Activated naive CD4-positive, alpha-beta T cell treated with anti-CD3 and anti-CD28 coated beads, Interleukin-2, amount 10 ng/mL, durations not matched to agents 7 days and 5 days (primary cell): ENCODE measurements at regions of chr2 and their contacts with region 1.

Region 1: GRCh38 chr2:240560480-240561326 is 546 bp downstream of the DUSP28 start:
- DNase-seq: peak; percentile 100
- H3K4me3 Mint-ChIP-seq: peak overlapping the region; percentile 82
- H3K27ac Mint-ChIP-seq: peak overlapping the region; percentile 90
- H3K4me1 Mint-ChIP-seq: peaks cover 79% of the 10 kb centered on the region
- H3K27me3 Mint-ChIP-seq: no peaks in the 10 kb centered on the region

Region 2: DNA sequence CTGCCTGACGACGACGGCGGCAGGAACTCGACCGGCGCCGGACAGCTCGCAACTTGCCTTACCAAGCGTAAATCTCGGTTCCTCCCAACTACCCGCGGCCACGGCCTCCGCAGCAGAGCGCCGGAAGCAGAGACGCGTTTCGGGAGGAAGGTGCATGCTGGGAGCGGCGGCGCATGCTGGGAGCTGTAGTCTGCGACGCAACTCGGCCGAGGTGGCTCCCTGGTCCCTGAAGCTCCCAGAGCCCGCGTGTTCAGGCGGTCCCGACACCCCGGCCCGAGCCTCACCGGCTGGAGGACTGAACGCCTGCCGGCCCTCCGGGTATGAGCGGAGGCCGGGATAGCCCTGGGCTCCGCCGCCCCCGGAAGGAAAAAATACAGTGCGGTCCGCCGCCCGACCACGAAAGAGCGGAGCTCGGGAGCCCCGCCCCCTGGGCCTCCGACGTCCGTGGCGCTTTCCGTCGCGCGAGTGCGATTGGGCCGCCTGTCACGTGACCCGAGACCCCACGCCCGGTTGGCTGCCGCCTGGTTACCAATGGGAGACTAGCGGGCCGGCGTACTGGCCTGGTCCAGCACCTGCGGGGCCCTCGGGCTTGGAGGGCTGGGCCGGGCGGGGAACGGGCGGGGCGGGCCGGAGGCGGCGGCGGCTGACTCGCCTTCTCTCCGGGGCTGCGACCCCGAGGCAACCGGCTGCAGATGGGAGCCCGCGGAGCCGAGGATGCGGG is 25.7 kb after region 1 on chr2 and contains the start of gene CAPN10:
- CTCF ChIA-PET with region 1: interaction called, 100 read pairs
- DNase-seq: peak; percentile 98
- H3K4me3 Mint-ChIP-seq: peak within 1 kb of the TSS; percentile 96
- H3K27ac Mint-ChIP-seq: peak within 1 kb of the TSS; percentile 96
- H3K4me1 Mint-ChIP-seq: peaks cover 52% of the 10 kb centered on the region
- H3K27me3 Mint-ChIP-seq: no peaks in the 10 kb centered on the region